ENCODE measurements at regions of chr12 and their contacts with region 1.

Region 1: DNA sequence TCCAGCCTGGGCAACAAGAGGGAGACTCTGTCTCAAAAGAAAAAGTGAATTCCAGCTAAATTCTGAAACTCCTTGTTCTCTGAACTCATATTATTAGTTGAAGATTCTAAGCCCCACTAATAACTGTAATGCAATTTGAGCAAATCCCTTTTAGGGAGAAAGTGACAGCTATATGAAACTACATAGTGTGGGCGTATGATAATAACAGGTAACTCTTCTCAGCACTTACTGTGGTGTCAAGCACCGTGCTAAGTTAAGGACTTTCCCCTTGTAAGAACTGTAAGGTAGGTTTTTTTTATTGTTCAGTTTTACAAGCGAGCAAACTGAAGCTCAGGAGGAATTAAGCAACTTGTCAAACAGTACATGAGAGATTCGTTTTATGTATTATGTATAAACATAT is 5.4 kb downstream of the ANKRD13A start:
- DNase-seq: no peak
- ATAC-seq: no peak
- H3K4me3 ChIP-seq: no peak overlapping the region
- H3K27ac ChIP-seq: no peak overlapping the region
- H3K4me1 ChIP-seq: 0 out of 2 replicates have a peak, but pooled peaks cover 2% of the 10 kb centered on the region
- H3K27me3 ChIP-seq: no peaks in the 10 kb centered on the region
- CTCF ChIP-seq: no peak

Region 2: DNA sequence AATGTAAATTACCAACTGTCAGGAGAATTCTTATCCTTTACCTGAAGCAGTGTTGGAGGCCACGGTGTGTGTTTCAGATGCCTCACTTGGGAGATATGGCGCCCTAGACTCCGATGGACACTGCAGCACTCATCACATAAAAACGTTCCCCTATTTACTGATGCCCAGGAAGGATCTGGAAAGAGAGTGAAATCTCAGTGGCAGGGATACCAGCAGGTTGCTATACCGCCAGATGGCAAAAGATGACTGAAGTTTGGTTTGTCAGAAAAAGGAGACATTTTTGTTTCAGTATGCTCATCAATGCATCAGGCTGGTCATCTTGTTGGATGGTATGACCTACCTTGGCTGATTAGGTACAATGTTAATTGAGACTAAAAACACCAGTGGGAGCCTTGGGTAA is 13.0 kb before region 1 on chr12:
- CTCF ChIA-PET with region 1: no interaction called
- POLR2A ChIA-PET with region 1: interaction called, 10 read pairs
- in situ Hi-C with region 1: no loop called
- intact Hi-C with region 1: no loop called
- DNase-seq: no peak
- ATAC-seq: no peak
- H3K4me3 ChIP-seq: no peak overlapping the region
- H3K27ac ChIP-seq: no peak overlapping the region
- H3K4me1 ChIP-seq: peaks cover 14% of the 10 kb centered on the region
- H3K27me3 ChIP-seq: no peaks in the 10 kb centered on the region
- CTCF ChIP-seq: no peak

Measured in Panc1 (cell line).